ENCODE measurements at regions of chr7 and their contacts with region 1.

Region 1: GRCh38 chr7:131040467-131040932 is 287.2 kb upstream of the MKLN1 start:
- DNase-seq: peak; percentile 77
- H3K4me3 Mint-ChIP-seq: peak overlapping the region; percentile 53
- H3K27ac Mint-ChIP-seq: peak overlapping the region; percentile 78
- H3K4me1 Mint-ChIP-seq: peaks cover 31% of the 10 kb centered on the region
- H3K27me3 Mint-ChIP-seq: no peaks in the 10 kb centered on the region
- CTCF ChIP-seq: peak; percentile 87

Region 2: GRCh38 chr7:130793855-130794618 is 246.5 kb before region 1 on chr7:
- CTCF ChIA-PET with region 1: interaction called, 4 read pairs
- POLR2A ChIA-PET with region 1: no interaction called
- intact Hi-C with region 1: loop called (anchors 1 kb)
- DNase-seq: peak; percentile 56
- H3K4me3 Mint-ChIP-seq: peak overlapping the region; percentile 69
- H3K27ac Mint-ChIP-seq: peak overlapping the region; percentile 94
- H3K4me1 Mint-ChIP-seq: peaks cover 14% of the 10 kb centered on the region
- H3K27me3 Mint-ChIP-seq: no peaks in the 10 kb centered on the region
- CTCF ChIP-seq: no peak

Region 3: GRCh38 chr7:130912862-130913631 is 127.5 kb before region 1 on chr7:
- CTCF ChIA-PET with region 1: interaction called, 5 read pairs
- POLR2A ChIA-PET with region 1: interaction called, 13 read pairs
- intact Hi-C with region 1: no loop called
- DNase-seq: peak; percentile 95
- H3K4me3 Mint-ChIP-seq: peak overlapping the region; percentile 86
- H3K27ac Mint-ChIP-seq: peak overlapping the region; percentile 89
- H3K4me1 Mint-ChIP-seq: peaks cover 68% of the 10 kb centered on the region
- H3K27me3 Mint-ChIP-seq: no peaks in the 10 kb centered on the region
- CTCF ChIP-seq: no peak

Region 4: DNA sequence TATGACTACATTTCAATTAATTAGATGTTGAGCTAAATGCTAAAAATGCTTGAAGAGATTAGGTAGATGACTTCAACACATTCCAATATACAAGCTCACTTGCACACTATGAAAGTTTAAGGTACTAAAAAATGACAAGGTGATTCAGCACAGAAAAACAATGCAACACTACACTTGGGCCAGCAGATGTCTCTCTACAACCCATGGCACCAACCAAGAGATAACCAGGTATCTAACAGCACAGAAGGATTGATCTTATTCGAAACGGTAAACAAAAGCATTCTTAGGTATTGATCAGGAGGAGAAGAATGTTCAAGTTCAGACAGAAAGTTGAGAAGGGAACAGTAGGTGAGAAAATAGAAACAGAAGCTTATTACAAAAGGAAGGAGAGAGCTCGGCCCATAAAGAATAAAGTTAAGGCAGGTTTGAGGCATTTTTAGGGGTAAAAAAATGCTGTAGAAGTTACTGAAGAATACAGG is 58.3 kb before region 1 on chr7:
- CTCF ChIA-PET with region 1: interaction called, 72 read pairs
- POLR2A ChIA-PET with region 1: interaction called, 13 read pairs
- intact Hi-C with region 1: loop called (anchors 1 kb)
- DNase-seq: peak; percentile 69
- H3K4me3 Mint-ChIP-seq: no peak overlapping the region
- H3K27ac Mint-ChIP-seq: no peak overlapping the region
- H3K4me1 Mint-ChIP-seq: peaks cover 21% of the 10 kb centered on the region
- H3K27me3 Mint-ChIP-seq: no peaks in the 10 kb centered on the region
- CTCF ChIP-seq: peak; percentile 68

Region 5: DNA sequence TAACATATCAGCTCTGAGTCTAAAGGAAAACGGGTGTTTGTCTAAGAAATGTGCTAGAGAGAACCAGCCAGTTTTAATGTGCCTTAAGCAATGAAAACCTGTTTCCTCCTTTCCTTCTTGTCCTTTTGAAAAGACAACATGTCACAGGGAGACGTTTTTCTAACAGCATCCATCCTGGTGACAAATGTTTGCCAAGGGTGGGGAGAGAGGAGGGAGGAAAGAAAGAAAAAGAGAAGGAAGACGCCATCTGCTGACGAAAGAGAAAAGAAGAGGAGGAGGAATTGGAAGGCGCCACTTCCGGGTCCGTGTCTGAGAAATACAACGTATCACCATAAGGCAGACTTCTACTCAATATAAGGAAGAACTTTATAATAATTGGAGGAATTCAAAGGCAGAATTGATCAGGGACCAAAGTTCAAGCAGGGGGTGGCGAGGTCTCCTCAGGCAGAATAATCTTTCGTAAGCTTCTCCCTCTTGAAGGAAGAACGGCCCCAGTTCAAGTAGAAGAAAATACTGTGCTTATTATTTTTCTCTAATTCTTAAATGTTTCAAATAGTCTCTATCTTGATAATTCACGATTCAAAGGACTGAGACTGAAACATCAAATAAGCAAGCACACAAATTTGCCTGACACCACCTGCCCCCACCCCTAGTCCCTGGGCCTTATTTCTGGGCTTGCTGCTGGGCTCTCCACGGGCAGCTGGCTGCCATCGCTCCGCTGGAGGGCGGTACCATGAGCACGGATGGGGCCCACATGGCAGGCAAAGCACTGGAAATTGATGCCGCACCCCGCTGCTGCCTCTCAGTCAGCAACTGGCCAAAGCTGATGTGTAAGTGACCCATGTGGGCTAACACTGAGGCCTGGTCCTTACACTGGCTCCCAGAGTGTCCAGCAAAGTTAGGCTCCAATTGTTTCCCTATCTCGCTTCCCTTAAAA is 32.8 kb before region 1 on chr7:
- CTCF ChIA-PET with region 1: interaction called, 24 read pairs
- POLR2A ChIA-PET with region 1: interaction called, 18 read pairs
- intact Hi-C with region 1: loop called (anchors 2 kb)
- DNase-seq: peak; percentile 87
- H3K4me3 Mint-ChIP-seq: peak overlapping the region; percentile 15
- H3K27ac Mint-ChIP-seq: peak overlapping the region; percentile 84
- H3K4me1 Mint-ChIP-seq: peaks cover 46% of the 10 kb centered on the region
- H3K27me3 Mint-ChIP-seq: no peaks in the 10 kb centered on the region
- CTCF ChIP-seq: peak; percentile 58

Region 6: DNA sequence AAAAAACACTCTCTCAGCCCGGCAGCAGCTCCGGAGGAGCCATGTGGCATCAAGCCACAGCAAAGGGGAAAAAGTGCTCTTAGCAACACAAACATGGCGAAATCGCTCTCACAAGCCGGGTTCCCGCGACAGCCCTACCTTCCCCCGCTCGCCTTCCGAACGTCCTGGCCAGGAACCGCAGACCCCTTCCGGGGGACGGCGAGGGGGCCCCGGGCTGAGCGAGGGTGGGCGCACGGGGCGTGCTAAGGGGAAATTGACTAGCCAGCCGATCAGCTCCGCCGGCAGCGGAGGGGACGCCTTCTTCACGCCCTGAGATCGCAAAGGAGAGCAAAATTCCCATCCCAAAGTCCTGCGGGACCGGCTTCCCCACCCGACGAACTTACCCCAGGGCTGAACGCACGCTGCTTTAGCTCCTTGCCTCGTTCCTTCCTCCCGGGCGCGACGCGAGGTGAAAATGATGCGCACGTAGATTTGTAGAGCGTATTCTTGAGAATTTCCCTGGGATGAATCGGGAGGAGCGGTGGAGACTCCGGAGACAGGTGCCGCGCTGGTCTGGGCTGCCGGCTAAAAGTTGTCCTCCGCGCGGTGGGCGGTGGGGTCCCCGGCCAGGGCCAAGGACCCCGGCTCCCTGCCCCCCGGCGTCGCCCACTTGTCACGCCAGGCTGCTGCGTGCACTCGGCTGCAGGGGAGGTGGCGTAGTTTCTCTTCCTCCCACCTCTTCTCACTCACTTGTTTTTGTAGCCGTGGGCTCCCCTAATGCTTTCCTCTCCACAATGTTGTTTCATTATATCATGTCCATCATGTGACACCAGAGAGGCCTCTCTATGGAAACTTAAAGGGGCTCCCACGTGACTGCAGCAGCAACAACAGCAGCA is 67.1 kb after region 1 on chr7:
- CTCF ChIA-PET with region 1: no interaction called
- POLR2A ChIA-PET with region 1: interaction called, 5 read pairs
- intact Hi-C with region 1: loop called (anchors 10 kb)
- DNase-seq: peak; percentile 76
- H3K4me3 Mint-ChIP-seq: peak overlapping the region; percentile 75
- H3K27ac Mint-ChIP-seq: peak overlapping the region; percentile 70
- H3K4me1 Mint-ChIP-seq: peaks cover 46% of the 10 kb centered on the region
- H3K27me3 Mint-ChIP-seq: no peaks in the 10 kb centered on the region
- CTCF ChIP-seq: no peak

Measured in MCF 10A (cell line).